Esophagus muscularis mucosa (tissue), 4 donors: ENCODE measurements at regions of chr18 and their contacts with region 1.

Region 1: DNA sequence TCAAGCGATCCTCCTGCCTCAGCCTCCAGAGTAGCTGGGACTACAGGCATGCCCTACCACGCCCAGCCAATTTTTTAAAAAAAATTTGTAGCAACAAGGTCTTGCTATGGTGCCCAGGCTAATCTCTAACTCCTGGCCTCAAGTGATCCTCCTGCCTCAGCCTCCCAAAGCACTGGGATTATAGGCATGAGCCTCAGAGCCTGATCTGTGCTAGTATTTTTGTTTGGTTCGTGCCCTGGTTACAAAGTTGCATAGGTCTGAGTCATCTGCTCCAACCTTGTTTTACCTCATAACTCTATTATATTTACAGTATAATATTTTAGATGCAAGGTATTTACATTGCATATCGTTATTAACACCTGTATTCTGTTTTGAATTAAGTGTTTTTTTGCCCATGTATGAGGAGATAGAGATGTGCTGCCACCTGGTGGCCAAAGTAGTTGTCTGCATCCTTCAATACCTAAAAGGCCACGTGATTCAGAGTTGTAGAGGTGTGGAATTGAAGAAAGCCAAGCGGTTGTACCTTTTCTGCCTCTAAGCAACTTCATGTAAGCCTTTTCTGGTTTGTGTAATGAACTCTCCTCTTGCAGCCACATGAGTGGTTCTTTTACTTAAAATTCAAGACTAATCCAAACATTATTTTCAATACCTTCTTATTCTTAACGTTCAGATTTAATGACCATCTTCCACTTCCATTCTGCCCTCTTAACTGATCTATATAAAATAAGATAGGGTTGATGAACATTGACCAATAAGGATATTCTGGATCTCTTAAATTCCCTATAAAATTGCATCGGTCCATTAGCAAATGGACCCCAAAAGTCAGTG is 19.9 kb upstream of the CABYR start:
- DNase-seq: peak; percentile 92
- H3K4me3 ChIP-seq: no peak overlapping the region
- H3K27ac ChIP-seq: no peak overlapping the region
- H3K4me1 ChIP-seq: peaks cover 0 to 4% (median 0%) of the 10 kb centered on the region in 4 donors
- H3K27me3 ChIP-seq: no peaks in the 10 kb centered on the region
- CTCF ChIP-seq: peak; percentile 91 to 97 (median 92)
- EP300 ChIP-seq: no peak
- POLR2A ChIP-seq: no peak

Region 2: DNA sequence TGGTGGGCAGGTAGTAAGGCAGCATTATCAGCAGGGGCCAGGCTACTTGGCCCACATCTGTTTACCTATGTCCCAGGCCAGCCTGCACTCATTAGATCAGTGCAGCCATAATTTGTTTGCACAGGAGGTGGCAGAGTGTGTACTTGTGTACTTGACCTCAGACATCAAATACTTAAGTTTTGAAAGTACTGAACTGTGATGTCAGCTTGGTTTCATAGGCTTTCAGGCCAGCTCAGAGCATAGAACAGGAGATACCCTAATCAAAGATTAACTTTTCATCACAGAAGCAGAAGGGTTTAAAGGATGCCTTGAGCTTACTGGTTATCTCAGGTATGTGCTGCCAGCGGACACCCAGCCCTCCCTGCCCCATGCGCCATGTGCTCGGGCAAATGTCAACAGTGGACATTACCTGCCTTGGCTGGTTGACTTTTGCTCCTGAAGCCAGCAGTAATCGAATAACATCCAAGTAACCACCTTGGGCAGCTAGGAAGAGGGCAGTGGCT is 489.5 kb before region 1 on chr18:
- intact Hi-C with region 1: loop called (anchors 5 kb)
- DNase-seq: no peak
- H3K4me3 ChIP-seq: no peak overlapping the region
- H3K27ac ChIP-seq: no peak overlapping the region
- H3K4me1 ChIP-seq: peaks cover 0 to 5% (median 0%) of the 10 kb centered on the region in 4 donors
- H3K27me3 ChIP-seq: no peaks in the 10 kb centered on the region
- CTCF ChIP-seq: no peak
- EP300 ChIP-seq: no peak
- POLR2A ChIP-seq: no peak

Region 3: GRCh38 chr18:23828426-23828825 is 290.5 kb before region 1 on chr18:
- intact Hi-C with region 1: loop called (anchors 5 kb)
- DNase-seq: peak; percentile 17
- H3K4me3 ChIP-seq: no peak overlapping the region
- H3K27ac ChIP-seq: no peak overlapping the region
- H3K4me1 ChIP-seq: peaks cover 19 to 34% (median 29%) of the 10 kb centered on the region in 4 donors
- H3K27me3 ChIP-seq: no peaks in the 10 kb centered on the region
- CTCF ChIP-seq: no peak
- EP300 ChIP-seq: no peak
- POLR2A ChIP-seq: no peak

Region 4: DNA sequence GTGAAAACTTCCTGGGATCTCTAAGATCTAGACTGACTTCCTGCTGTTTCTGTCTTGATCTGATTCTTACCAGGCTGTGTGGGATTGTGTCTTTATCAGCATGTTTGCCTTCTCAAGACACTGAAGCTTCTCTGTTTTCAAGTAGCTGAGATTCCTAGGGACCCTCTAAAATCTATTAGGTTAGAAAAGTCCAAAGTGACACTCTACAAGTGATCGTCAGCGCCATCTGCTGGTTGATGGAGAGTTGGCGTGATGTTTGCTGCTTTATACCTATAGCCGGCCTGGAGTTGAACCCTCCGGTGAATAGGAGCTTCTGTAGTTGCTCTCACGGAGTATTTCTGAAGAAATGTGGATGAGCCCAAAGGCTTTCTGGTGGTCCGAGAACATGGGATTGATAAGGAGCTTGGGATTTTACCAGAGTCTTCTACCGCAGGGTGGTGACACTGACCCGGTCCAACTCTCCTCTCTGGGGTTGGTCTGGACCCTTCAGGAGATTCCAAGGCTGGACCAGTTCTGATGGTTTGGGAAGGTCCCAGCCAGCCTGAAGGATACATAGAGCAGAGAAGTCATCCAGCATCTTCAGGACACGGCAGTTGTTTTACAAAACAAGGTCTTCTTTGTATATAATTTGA is 200.4 kb before region 1 on chr18:
- intact Hi-C with region 1: loop called (anchors 5 kb)
- DNase-seq: no peak
- H3K4me3 ChIP-seq: no peak overlapping the region
- H3K27ac ChIP-seq: no peak overlapping the region
- H3K4me1 ChIP-seq: peaks cover 0 to 5% (median 4%) of the 10 kb centered on the region in 4 donors
- H3K27me3 ChIP-seq: no peaks in the 10 kb centered on the region
- CTCF ChIP-seq: peak; percentile 78 to 92 (median 82)
- EP300 ChIP-seq: no peak
- POLR2A ChIP-seq: no peak

Region 5: GRCh38 chr18:24014062-24014985 is 104.6 kb before region 1 on chr18 and contains the start of gene TTC39C:
- intact Hi-C with region 1: loop called (anchors 5 kb)
- DNase-seq: peak; percentile 93
- H3K4me3 ChIP-seq: peak within 1 kb of the TSS; percentile 71 to 96 (median 82)
- H3K27ac ChIP-seq: peak within 1 kb of the TSS; percentile 81 to 91 (median 86)
- H3K4me1 ChIP-seq: peaks cover 10 to 31% (median 24%) of the 10 kb centered on the region in 4 donors
- H3K27me3 ChIP-seq: no peaks in the 10 kb centered on the region
- CTCF ChIP-seq: no peak
- EP300 ChIP-seq: no peak
- POLR2A ChIP-seq: no peak
- total RNA-seq, gene TTC39C: 32.3 to 45.4 (median 34.8) TPM